ENCODE measurements at regions of chr4 and their contacts with region 1.

Region 1: GRCh38 chr4:142282870-142283431 is 563.1 kb downstream of the INPP4B start:
- DNase-seq: peak in 5 of 9 experiments; percentile 12 to 53 (median 34)
- ATAC-seq: peak; percentile 34
- H3K4me3 ChIP-seq: no peak overlapping the region
- H3K4me3 Mint-ChIP-seq: no peak overlapping the region
- H3K27ac ChIP-seq: no peak overlapping the region
- H3K27ac Mint-ChIP-seq: no peak overlapping the region
- H3K4me1 ChIP-seq: peaks cover 7% of the 10 kb centered on the region
- H3K4me1 Mint-ChIP-seq: peaks cover 20% of the 10 kb centered on the region
- H3K27me3 ChIP-seq: no peaks in the 10 kb centered on the region
- H3K27me3 Mint-ChIP-seq: no peaks in the 10 kb centered on the region
- CTCF ChIP-seq: peak; percentile 78

Region 2: DNA sequence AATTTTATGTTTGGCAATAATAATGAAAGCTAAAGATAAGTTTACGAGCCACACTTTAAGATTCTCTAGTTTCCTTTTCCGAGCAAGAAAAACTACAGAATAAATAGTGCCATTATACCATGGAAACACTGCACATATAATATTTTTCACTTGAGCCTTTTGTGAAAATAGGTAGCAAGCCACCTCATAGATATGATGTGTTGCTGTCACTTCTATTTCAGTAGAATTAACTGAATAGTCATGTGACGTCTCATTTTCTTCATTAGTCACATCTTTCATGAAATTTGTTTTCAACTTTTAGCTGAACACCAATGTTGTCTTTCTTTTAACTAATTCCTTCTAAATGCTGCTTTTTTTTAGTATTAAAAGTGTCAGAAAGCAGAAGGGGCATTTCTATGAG is 11.1 kb before region 1 on chr4:
- CTCF ChIA-PET with region 1: interaction called, 30 read pairs
- POLR2A ChIA-PET with region 1: no interaction called
- intact Hi-C with region 1: no loop called
- DNase-seq: no peak
- ATAC-seq: no peak
- H3K4me3 ChIP-seq: no peak overlapping the region
- H3K4me3 Mint-ChIP-seq: no peak overlapping the region
- H3K27ac ChIP-seq: no peak overlapping the region
- H3K27ac Mint-ChIP-seq: no peak overlapping the region
- H3K4me1 ChIP-seq: no peaks in the 10 kb centered on the region
- H3K4me1 Mint-ChIP-seq: peaks cover 49% of the 10 kb centered on the region
- H3K27me3 ChIP-seq: no peaks in the 10 kb centered on the region
- H3K27me3 Mint-ChIP-seq: no peaks in the 10 kb centered on the region
- CTCF ChIP-seq: no peak

Region 3: DNA sequence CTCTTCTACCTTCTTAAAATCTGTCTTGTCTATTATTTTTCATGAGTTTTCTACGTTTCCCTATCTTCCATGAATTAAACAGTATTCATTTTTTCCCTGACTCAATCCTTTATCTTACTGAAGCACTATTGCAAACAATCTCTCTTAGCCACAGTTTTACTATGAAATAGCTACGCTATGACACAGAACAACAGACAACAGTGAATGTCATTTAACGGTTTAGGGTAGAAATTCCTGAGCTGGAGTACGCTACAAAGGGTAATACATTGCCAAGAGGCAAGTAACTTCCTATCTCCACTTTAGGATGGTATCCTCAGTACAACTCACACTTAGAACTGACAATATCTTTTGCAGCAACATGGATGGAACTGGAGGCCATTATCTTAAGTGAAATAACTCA is 10.6 kb after region 1 on chr4:
- CTCF ChIA-PET with region 1: interaction called, 11 read pairs
- POLR2A ChIA-PET with region 1: interaction called, 3 read pairs
- intact Hi-C with region 1: no loop called
- DNase-seq: no peak
- ATAC-seq: no peak
- H3K4me3 ChIP-seq: no peak overlapping the region
- H3K4me3 Mint-ChIP-seq: no peak overlapping the region
- H3K27ac ChIP-seq: no peak overlapping the region
- H3K27ac Mint-ChIP-seq: no peak overlapping the region
- H3K4me1 ChIP-seq: no peaks in the 10 kb centered on the region
- H3K4me1 Mint-ChIP-seq: peaks cover 23% of the 10 kb centered on the region
- H3K27me3 ChIP-seq: no peaks in the 10 kb centered on the region
- H3K27me3 Mint-ChIP-seq: no peaks in the 10 kb centered on the region
- CTCF ChIP-seq: no peak

Region 4: GRCh38 chr4:142314686-142315085 is 31.7 kb after region 1 on chr4:
- CTCF ChIA-PET with region 1: interaction called, 4 read pairs
- POLR2A ChIA-PET with region 1: no interaction called
- intact Hi-C with region 1: loop called in 1 of 2 experiments (anchors 5 kb)
- DNase-seq: no peak
- ATAC-seq: no peak
- H3K4me3 ChIP-seq: no peak overlapping the region
- H3K4me3 Mint-ChIP-seq: no peak overlapping the region
- H3K27ac ChIP-seq: no peak overlapping the region
- H3K27ac Mint-ChIP-seq: no peak overlapping the region
- H3K4me1 ChIP-seq: peaks cover 21% of the 10 kb centered on the region
- H3K4me1 Mint-ChIP-seq: peaks cover 70% of the 10 kb centered on the region
- H3K27me3 ChIP-seq: no peaks in the 10 kb centered on the region
- H3K27me3 Mint-ChIP-seq: no peaks in the 10 kb centered on the region
- CTCF ChIP-seq: no peak

Region 5: GRCh38 chr4:142434519-142435239 is 151.7 kb after region 1 on chr4:
- CTCF ChIA-PET with region 1: interaction called, 4 read pairs
- POLR2A ChIA-PET with region 1: no interaction called
- intact Hi-C with region 1: loop called in 1 of 2 experiments (anchors 5 kb)
- DNase-seq: peak in 2 of 9 experiments; percentile 48 to 56
- ATAC-seq: peak; percentile 55
- H3K4me3 ChIP-seq: no peak overlapping the region
- H3K4me3 Mint-ChIP-seq: no peak overlapping the region
- H3K27ac ChIP-seq: no peak overlapping the region
- H3K27ac Mint-ChIP-seq: no peak overlapping the region
- H3K4me1 ChIP-seq: no peaks in the 10 kb centered on the region
- H3K4me1 Mint-ChIP-seq: peaks cover 16% of the 10 kb centered on the region
- H3K27me3 ChIP-seq: no peaks in the 10 kb centered on the region
- H3K27me3 Mint-ChIP-seq: no peaks in the 10 kb centered on the region
- CTCF ChIP-seq: no peak

Region 6: DNA sequence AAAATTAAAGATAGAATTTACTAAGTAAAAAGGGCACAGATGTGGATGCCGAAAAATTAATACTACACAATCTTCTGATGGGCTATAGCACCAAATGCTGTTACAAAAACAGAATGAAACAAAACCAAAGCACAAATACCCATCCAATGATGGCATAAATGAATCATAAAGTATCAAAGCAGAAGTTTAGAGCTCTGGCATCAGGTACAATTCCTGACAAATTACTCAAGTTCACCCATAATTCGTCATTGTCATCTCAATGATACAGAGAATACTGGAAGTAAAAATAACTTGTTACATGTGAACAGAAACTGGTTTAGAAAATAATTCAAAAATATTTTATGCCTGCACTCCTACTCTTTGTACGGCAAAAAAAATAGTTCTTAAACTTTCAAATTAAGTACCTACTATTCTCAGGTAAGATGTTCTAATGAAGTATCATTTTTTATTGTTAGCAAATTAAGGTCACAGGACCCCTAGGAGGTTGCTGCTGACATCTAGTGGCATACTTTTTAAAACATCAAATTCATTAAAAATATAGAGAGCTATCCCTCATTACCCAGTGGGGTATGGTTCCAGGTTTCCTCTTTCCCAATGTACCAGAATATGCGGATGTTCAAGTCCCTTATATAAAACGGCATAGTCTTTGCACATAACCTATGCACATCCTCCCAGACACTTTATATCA is 437.0 kb after region 1 on chr4:
- CTCF ChIA-PET with region 1: interaction called, 11 read pairs
- POLR2A ChIA-PET with region 1: interaction called, 3 read pairs
- intact Hi-C with region 1: loop called (anchors 1 to 2 kb)
- DNase-seq: peak in 2 of 9 experiments; percentile 48 to 56
- ATAC-seq: peak; percentile 49
- H3K4me3 ChIP-seq: no peak overlapping the region
- H3K4me3 Mint-ChIP-seq: no peak overlapping the region
- H3K27ac ChIP-seq: no peak overlapping the region
- H3K27ac Mint-ChIP-seq: no peak overlapping the region
- H3K4me1 ChIP-seq: peaks cover 3% of the 10 kb centered on the region
- H3K4me1 Mint-ChIP-seq: peaks cover 13% of the 10 kb centered on the region
- H3K27me3 ChIP-seq: no peaks in the 10 kb centered on the region
- H3K27me3 Mint-ChIP-seq: no peaks in the 10 kb centered on the region
- CTCF ChIP-seq: peak; percentile 69

Region 7: GRCh38 chr4:142840516-142841123 is 557.7 kb after region 1 on chr4:
- CTCF ChIA-PET with region 1: interaction called, 3 read pairs
- POLR2A ChIA-PET with region 1: no interaction called
- intact Hi-C with region 1: loop called (anchors 1 to 2 kb)
- DNase-seq: peak in 2 of 9 experiments; percentile 43 to 53
- ATAC-seq: no peak
- H3K4me3 ChIP-seq: no peak overlapping the region
- H3K4me3 Mint-ChIP-seq: no peak overlapping the region
- H3K27ac ChIP-seq: no peak overlapping the region
- H3K27ac Mint-ChIP-seq: no peak overlapping the region
- H3K4me1 ChIP-seq: peaks cover 4% of the 10 kb centered on the region
- H3K4me1 Mint-ChIP-seq: peaks cover 9% of the 10 kb centered on the region
- H3K27me3 ChIP-seq: peaks cover 3 to 4% of the 10 kb centered on the region in 2 experiments
- H3K27me3 Mint-ChIP-seq: peaks cover 12% of the 10 kb centered on the region
- CTCF ChIP-seq: peak; percentile 77